ENCODE measurements at regions of chr14 and their contacts with region 1.

Region 1: GRCh38 chr14:89954070-89955028 is at the start of gene EFCAB11:
- DNase-seq: peak; percentile 97
- ATAC-seq: peak; percentile 86
- H3K4me3 Mint-ChIP-seq: peak within 1 kb of the TSS; percentile 94
- H3K27ac Mint-ChIP-seq: peak within 1 kb of the TSS; percentile 91
- H3K4me1 Mint-ChIP-seq: peaks cover 32% of the 10 kb centered on the region
- H3K27me3 Mint-ChIP-seq: no peaks in the 10 kb centered on the region
- total RNA-seq, gene EFCAB11: 4.8 to 6.3 TPM

Region 2: GRCh38 chr14:88792572-88793258 is 1161.6 kb before region 1 on chr14 and contains the start of gene EML5:
- CTCF ChIA-PET with region 1: interaction called, 5 read pairs
- POLR2A ChIA-PET with region 1: no interaction called
- intact Hi-C with region 1: loop called in 1 of 2 experiments (anchors 2 kb)
- DNase-seq: peak; percentile 90
- ATAC-seq: peak; percentile 76
- H3K4me3 Mint-ChIP-seq: peak within 1 kb of the TSS; percentile 87
- H3K27ac Mint-ChIP-seq: peak within 1 kb of the TSS; percentile 87
- H3K4me1 Mint-ChIP-seq: peaks cover 26% of the 10 kb centered on the region
- H3K27me3 Mint-ChIP-seq: no peaks in the 10 kb centered on the region
- total RNA-seq, gene EML5: 8.1 TPM

Region 3: GRCh38 chr14:89430391-89431236 is 523.7 kb before region 1 on chr14:
- CTCF ChIA-PET with region 1: no interaction called
- POLR2A ChIA-PET with region 1: interaction called, 11 read pairs
- intact Hi-C with region 1: loop called (anchors 5 to 10 kb)
- DNase-seq: peak; percentile 75
- ATAC-seq: peak; percentile 89
- H3K4me3 Mint-ChIP-seq: peak overlapping the region; percentile 71
- H3K27ac Mint-ChIP-seq: peak overlapping the region; percentile 94
- H3K4me1 Mint-ChIP-seq: peaks cover 70% of the 10 kb centered on the region
- H3K27me3 Mint-ChIP-seq: no peaks in the 10 kb centered on the region

Region 4: GRCh38 chr14:89576145-89576927 is 378.0 kb before region 1 on chr14:
- CTCF ChIA-PET with region 1: no interaction called
- POLR2A ChIA-PET with region 1: no interaction called
- intact Hi-C with region 1: no loop called
- DNase-seq: no peak
- ATAC-seq: no peak
- H3K4me3 Mint-ChIP-seq: no peak overlapping the region
- H3K27ac Mint-ChIP-seq: no peak overlapping the region
- H3K4me1 Mint-ChIP-seq: peaks cover 32% of the 10 kb centered on the region
- H3K27me3 Mint-ChIP-seq: no peaks in the 10 kb centered on the region

Region 5: DNA sequence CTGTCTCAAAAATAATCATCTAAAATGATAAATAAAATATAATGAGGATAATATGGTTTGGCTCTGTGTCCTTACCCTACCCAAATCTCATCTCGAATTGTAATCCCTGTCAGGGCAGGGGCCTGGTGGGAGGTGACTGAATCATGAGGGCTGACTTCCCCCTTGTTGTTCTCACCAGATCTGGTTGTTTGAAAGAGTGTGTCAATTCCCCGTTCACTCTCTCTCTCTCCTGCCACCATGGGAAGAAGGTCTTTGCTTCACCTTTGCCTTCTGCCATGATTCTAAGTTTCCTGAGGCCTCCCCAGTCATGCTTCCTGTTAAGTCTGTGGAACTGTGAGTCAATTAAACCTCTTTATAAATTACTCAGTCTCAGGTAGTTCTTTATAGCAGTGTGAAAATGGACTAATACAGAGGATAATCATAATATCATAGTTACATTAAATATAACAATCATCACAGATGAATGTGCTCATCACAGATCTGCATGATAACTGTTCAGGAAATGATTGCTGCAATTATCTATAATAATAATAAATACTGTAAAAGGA is 12.4 kb before region 1 on chr14:
- CTCF ChIA-PET with region 1: interaction called, 31 read pairs
- POLR2A ChIA-PET with region 1: no interaction called
- intact Hi-C with region 1: no loop called
- DNase-seq: peak; percentile 33
- ATAC-seq: peak; percentile 40
- H3K4me3 Mint-ChIP-seq: no peak overlapping the region
- H3K27ac Mint-ChIP-seq: peak overlapping the region; percentile 7
- H3K4me1 Mint-ChIP-seq: peaks cover 6% of the 10 kb centered on the region
- H3K27me3 Mint-ChIP-seq: no peaks in the 10 kb centered on the region

Region 6: GRCh38 chr14:90256354-90257131 is 302.2 kb after region 1 on chr14 and contains the start of gene PSMC1:
- CTCF ChIA-PET with region 1: interaction called, 4 read pairs
- POLR2A ChIA-PET with region 1: no interaction called
- intact Hi-C with region 1: loop called (anchors 1 to 2 kb)
- DNase-seq: peak; percentile 94
- ATAC-seq: peak; percentile 97
- H3K4me3 Mint-ChIP-seq: peak within 1 kb of the TSS; percentile 99
- H3K27ac Mint-ChIP-seq: peak within 1 kb of the TSS; percentile 97
- H3K4me1 Mint-ChIP-seq: peaks cover 26% of the 10 kb centered on the region
- H3K27me3 Mint-ChIP-seq: no peaks in the 10 kb centered on the region
- total RNA-seq, gene PSMC1: 77.3 to 127 TPM

Region 7: GRCh38 chr14:90399541-90400444 is 445.4 kb after region 1 on chr14:
- CTCF ChIA-PET with region 1: no interaction called
- POLR2A ChIA-PET with region 1: no interaction called
- intact Hi-C with region 1: loop called in 1 of 2 experiments (anchors 1 kb)
- DNase-seq: peak; percentile 93
- ATAC-seq: peak; percentile 62
- H3K4me3 Mint-ChIP-seq: peak overlapping the region; percentile 97
- H3K27ac Mint-ChIP-seq: peak overlapping the region; percentile 95
- H3K4me1 Mint-ChIP-seq: peaks cover 53% of the 10 kb centered on the region
- H3K27me3 Mint-ChIP-seq: no peaks in the 10 kb centered on the region